ENCODE measurements at regions of chr7 and their contacts with region 1.

Region 1: DNA sequence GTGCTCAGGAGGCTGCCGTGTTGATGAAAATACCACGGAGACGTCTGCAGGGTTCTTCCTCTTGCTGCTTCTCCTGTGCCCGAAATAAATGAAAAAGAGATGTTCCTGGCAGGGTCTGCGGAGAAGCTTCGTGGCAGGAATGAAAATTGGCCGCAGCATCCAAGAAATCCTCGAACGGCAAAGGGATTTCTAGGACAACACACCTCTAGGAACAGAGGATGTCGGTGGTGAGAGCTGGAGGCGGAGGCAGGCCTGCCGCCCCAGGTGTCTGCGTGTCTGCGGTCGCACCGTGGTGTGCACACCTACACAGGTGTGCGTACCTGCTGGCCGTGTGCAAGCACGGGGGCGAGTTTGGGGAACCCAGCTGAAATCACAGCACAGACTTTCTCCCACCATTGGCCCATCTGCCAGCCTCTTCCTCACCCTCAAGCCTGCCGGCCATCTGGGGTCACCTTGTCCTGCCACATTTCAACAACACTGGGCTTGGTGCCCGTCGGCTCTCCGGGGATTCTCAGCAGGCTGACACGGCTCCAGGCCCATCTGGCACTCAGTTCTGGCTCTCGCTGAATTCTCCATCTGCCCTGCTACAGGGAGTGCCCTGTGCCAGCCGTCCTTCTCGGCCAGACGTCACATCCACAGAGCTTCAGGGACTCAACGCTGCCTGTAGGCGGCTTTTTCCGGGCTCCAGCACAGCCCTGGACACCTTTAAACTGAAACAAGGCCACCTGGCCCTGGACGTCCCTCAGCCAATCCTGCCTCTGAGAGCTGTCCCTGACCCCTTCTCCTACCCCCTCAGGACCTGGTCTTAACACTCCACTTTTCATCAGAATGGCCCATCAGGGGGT is 43.2 kb downstream of the TMEM130 start:
- DNase-seq: no peak
- H3K4me3 Mint-ChIP-seq: no peak overlapping the region
- H3K27ac Mint-ChIP-seq: no peak overlapping the region
- H3K4me1 Mint-ChIP-seq: no peaks in the 10 kb centered on the region
- H3K27me3 Mint-ChIP-seq: no peaks in the 10 kb centered on the region

Region 2: DNA sequence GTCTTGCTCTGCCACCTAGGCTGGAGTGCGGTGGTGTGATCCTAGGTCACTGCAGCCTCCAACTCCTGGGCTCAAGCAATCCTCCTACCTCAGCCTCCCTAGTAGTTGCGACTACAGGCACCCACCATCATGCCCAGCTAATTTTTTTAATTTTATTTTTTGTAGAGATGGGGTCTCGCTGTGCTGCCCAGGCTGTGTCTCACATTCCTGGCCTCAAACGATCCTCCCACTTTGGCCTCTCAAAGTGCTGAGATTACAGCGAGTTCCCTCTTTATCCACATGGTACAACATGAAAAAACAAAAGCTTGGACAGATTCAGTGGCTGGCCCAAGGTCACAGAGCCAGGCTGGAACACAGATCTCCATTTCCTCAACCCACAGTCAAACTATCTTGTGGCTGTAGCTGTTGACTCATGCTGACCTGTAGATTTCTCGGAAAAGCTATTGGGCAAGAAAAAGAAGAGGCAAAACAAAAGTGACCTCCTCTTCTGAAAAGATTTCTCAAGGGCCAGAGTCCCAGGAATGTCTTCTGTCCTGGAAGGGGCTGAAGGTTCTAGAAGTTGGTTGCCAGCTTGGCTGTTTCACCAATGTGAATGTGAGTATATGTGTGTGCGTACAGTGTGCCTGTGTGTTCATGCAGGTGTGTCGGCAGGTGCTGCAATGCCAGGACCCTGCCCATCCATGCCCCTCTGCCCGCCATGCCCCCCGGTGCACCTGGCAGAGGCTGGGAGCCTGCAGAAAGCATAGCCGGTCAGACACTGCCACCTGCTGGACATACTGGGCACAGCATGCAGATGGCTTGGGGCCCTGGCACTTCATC is 14.8 kb after region 1 on chr7:
- CTCF ChIA-PET with region 1: interaction called, 40 read pairs
- POLR2A ChIA-PET with region 1: interaction called, 3 read pairs
- DNase-seq: peak; percentile 66
- H3K4me3 Mint-ChIP-seq: no peak overlapping the region
- H3K27ac Mint-ChIP-seq: no peak overlapping the region
- H3K4me1 Mint-ChIP-seq: no peaks in the 10 kb centered on the region
- H3K27me3 Mint-ChIP-seq: no peaks in the 10 kb centered on the region